ENCODE measurements at regions of chr6 and their contacts with region 1.

Region 1: GRCh38 chr6:16128759-16129622 is at the start of gene MYLIP:
- DNase-seq: peak; percentile 99
- H3K4me3 ChIP-seq: peak within 1 kb of the TSS; percentile 67 to 89
- H3K27ac ChIP-seq: peak within 1 kb of the TSS in 1 of 2 experiments; percentile 74; a peak in 1 of 4 replicates
- H3K4me1 ChIP-seq: peaks cover 23 to 27% of the 10 kb centered on the region in 2 experiments; a peak in 3 of 4 replicates
- H3K27me3 ChIP-seq: peaks cover 15% of the 10 kb centered on the region
- CTCF ChIP-seq: peak; percentile 51
- EP300 ChIP-seq: peak in 1 of 2 experiments; percentile 30; a peak in 1 of 4 replicates
- RAD21 ChIP-seq: peak; percentile 71
- polyA plus RNA-seq, gene MYLIP: 3.1 and 3.8 TPM in 2 replicates

Region 2: GRCh38 chr6:15691250-15691869 is 437.6 kb before region 1 on chr6:
- CTCF ChIA-PET with region 1: interaction called, 57 read pairs
- POLR2A ChIA-PET with region 1: interaction called, 11 read pairs
- DNase-seq: peak; percentile 90
- H3K4me3 ChIP-seq: peak overlapping the region in 1 of 2 experiments; percentile 22; a peak in 1 of 4 replicates
- H3K27ac ChIP-seq: no peak overlapping the region
- H3K4me1 ChIP-seq: no peaks in the 10 kb centered on the region; a peak in 1 of 4 replicates
- H3K27me3 ChIP-seq: no peaks in the 10 kb centered on the region
- CTCF ChIP-seq: peak; percentile 99
- EP300 ChIP-seq: peak in 1 of 2 experiments; percentile 21; a peak in 1 of 4 replicates
- RAD21 ChIP-seq: peak; percentile 100

Region 3: GRCh38 chr6:16108921-16109658 is 19.9 kb before region 1 on chr6:
- CTCF ChIA-PET with region 1: interaction called, 11 read pairs
- POLR2A ChIA-PET with region 1: interaction called, 3 read pairs
- DNase-seq: peak; percentile 42
- H3K4me3 ChIP-seq: no peak overlapping the region
- H3K27ac ChIP-seq: peak overlapping the region in 1 of 2 experiments; percentile 61; a peak in 2 of 4 replicates
- H3K4me1 ChIP-seq: peaks cover 0 to 17% of the 10 kb centered on the region in 2 experiments; a peak in 2 of 4 replicates
- H3K27me3 ChIP-seq: no peaks in the 10 kb centered on the region
- CTCF ChIP-seq: no peak
- EP300 ChIP-seq: peak in 1 of 2 experiments; percentile 70; a peak in 2 of 4 replicates
- RAD21 ChIP-seq: peak; percentile 18; the same call in 1 of the 2 replicates

Region 4: GRCh38 chr6:16154904-16155303 is 25.9 kb after region 1 on chr6:
- CTCF ChIA-PET with region 1: interaction called, 21 read pairs
- POLR2A ChIA-PET with region 1: no interaction called
- DNase-seq: no peak
- H3K4me3 ChIP-seq: no peak overlapping the region
- H3K27ac ChIP-seq: no peak overlapping the region
- H3K4me1 ChIP-seq: peaks cover 0 to 14% of the 10 kb centered on the region in 2 experiments; a peak in 2 of 4 replicates
- H3K27me3 ChIP-seq: no peaks in the 10 kb centered on the region
- CTCF ChIP-seq: no peak
- EP300 ChIP-seq: no peak
- RAD21 ChIP-seq: no peak

Region 5: GRCh38 chr6:16183187-16183664 is 54.2 kb after region 1 on chr6:
- CTCF ChIA-PET with region 1: interaction called, 27 read pairs
- POLR2A ChIA-PET with region 1: no interaction called
- DNase-seq: peak; percentile 60
- H3K4me3 ChIP-seq: no peak overlapping the region
- H3K27ac ChIP-seq: no peak overlapping the region
- H3K4me1 ChIP-seq: no peaks in the 10 kb centered on the region; a peak in 1 of 4 replicates
- H3K27me3 ChIP-seq: no peaks in the 10 kb centered on the region; the same call in 1 of the 2 replicates
- CTCF ChIP-seq: peak; percentile 75
- EP300 ChIP-seq: no peak
- RAD21 ChIP-seq: peak; percentile 84